Breast epithelium (tissue), 4 donors: ENCODE measurements at regions of chr14 and their contacts with region 1.

Region 1: DNA sequence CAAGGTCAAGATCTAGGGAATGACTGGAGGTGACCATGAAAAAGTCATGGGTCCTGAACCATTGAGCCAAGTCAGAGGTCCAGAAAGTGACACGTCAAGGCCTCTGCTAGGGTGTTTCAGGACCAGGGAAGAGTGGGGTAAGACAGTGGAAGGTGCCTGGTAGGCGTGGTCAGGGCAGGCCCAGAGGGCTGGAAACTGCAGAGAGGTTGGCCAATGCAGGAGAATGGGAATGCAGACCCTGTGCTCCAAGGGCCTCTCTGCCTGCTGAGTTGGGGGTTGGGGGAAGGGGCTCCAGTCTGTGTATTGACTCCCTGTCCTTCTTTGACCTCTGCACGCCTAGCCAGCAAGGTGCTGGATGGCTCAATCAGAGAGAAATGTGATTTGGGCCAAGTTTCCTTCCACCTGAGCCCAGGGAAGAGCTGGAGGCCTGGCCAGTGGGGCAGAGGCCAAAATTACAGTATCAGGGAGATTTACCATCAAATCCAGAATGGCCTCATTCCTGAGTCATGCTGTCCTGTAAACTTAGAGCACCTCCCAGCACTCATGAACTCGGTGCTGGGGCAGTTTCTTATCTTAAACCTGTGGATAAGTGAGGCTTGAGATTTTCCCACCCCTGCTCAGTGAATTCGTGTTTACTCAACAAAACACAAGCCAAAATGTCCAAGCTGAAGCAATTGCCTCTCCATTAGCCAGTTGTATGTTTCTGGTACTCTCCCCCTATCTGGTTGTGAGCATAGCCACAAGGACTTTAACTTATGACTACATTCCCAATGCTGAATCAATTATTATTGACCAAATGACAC is 24.4 kb downstream of the IRF2BPL start:
- DNase-seq: no peak
- H3K4me3 ChIP-seq: no peak overlapping the region
- H3K27ac ChIP-seq: peak overlapping the region; percentile 71 to 92
- H3K4me1 ChIP-seq: peaks cover 0 to 13% of the 10 kb centered on the region in 2 donors
- H3K27me3 ChIP-seq: no peaks in the 10 kb centered on the region
- CTCF ChIP-seq: no peak
- POLR2A ChIP-seq: no peak

Region 2: DNA sequence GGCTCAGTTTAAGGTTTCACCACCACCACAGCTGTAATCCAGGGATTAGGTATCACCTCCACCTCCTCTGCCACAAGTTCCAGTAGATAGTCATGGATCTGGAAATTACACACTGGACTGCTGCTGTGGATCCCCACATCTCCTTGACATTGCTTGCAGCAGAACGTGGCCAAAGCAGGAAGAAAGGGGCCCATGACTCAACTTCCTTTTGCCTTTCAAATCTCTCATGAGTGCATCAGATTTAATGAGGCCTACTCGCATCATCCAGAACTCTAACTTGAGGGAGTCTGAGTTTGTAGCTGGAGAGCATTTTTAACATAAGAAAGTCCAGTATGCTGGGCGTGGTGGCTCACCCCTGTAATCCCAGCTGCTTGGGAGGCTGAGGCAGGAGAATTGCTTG is 1798.6 kb before region 1 on chr14:
- intact Hi-C with region 1: no loop called
- DNase-seq: no peak
- H3K4me3 ChIP-seq: no peak overlapping the region
- H3K27ac ChIP-seq: no peak overlapping the region
- H3K4me1 ChIP-seq: no peaks in the 10 kb centered on the region
- H3K27me3 ChIP-seq: no peaks in the 10 kb centered on the region
- CTCF ChIP-seq: no peak
- POLR2A ChIP-seq: no peak

Region 3: DNA sequence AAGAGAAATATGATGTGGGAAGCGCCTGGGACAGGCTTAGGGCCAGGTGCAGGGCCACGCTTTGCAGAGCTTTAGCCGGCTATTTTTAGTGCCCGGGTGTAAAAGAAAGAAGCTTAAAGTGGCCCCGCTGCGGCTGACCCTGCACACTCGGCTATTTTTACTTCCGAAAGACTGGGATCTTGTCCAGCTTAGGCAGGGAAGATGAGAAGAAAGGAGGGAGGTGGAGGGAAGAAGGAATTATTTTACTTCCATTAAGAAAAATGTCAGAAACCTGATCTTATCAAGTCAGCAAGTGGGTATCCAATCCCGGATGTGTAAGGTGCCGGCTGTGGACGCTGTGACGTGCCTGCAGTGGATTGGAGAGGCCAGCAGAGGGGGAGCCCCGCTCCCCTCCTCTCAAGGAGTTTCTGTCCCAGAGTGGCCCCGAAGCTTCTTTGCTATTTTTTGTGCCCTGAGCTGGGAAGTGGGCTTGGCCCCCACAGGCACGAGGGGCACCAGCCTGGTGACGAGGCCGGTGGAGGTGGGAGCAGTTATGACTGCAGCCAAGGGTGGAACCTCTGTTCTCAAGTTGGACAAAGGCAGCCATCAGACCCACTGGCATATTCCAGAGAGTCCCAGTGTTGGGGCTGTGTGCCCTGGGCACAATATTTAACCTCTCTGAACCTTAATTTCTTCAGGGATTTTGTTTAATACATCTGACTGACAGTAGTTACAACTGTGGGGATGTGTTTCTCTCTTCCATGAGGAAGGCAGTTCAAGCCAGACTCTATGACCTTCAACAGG is 530.5 kb before region 1 on chr14:
- intact Hi-C with region 1: no loop called
- DNase-seq: no peak
- H3K4me3 ChIP-seq: peak overlapping the region; percentile 12 to 55 (median 15)
- H3K27ac ChIP-seq: no peak overlapping the region
- H3K4me1 ChIP-seq: peaks cover 0 to 3% of the 10 kb centered on the region in 2 donors
- H3K27me3 ChIP-seq: no peaks in the 10 kb centered on the region
- CTCF ChIP-seq: no peak
- POLR2A ChIP-seq: no peak

Region 4: DNA sequence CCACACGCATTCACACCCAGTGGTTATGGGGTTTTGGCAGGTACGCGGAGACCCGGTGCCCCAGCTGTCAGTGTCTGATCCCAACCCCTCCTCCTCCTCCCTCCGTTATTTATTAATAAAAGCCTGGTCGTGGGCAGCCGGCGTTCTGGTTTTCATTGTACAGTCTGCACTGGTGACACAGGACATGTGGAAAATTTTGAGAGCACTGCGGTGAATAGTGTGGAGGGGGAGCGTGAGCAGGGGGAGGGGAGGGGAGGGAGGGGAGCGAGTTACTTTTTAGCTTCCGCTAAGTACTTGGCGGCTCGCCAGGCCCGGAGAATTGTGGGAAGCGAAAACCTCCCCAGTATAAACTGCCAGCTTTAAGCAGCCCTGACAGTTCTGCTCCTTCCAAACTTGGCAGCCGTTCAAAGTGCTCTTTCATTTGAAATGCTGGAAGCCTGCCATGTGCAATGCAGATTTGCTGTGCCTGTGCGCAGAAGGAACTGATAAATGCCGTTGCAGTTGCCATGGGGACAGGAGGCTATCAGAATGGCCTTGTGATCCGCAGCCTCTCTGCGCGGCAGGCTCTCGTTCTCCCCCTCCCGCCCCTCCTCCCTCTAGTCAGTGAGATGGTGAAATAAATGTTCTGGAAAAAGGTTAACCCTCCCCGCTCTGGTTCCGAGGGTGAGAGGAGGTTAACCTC is 36.0 kb after region 1 on chr14:
- intact Hi-C with region 1: loop called (anchors 2 kb)
- DNase-seq: peak; percentile 95 to 100
- H3K4me3 ChIP-seq: peak overlapping the region; percentile 24 to 54 (median 28)
- H3K27ac ChIP-seq: peak overlapping the region; percentile 91 to 99
- H3K4me1 ChIP-seq: peaks cover 30 to 67% of the 10 kb centered on the region in 2 donors
- H3K27me3 ChIP-seq: no peaks in the 10 kb centered on the region
- CTCF ChIP-seq: peak in 1 of 3 donors; percentile 15
- POLR2A ChIP-seq: no peak